Stomach (tissue), 19 donors: ENCODE measurements at regions of chr5 and their contacts with region 1.

Region 1: GRCh38 chr5:14118527-14119320 is 24.4 kb upstream of the TRIO start:
- DNase-seq: peak in 1 of 2 donors; percentile 43
- H3K4me3 ChIP-seq: no peak overlapping the region
- H3K27ac ChIP-seq: no peak overlapping the region
- H3K4me1 ChIP-seq: peaks cover 0 to 2% (median 0%) of the 10 kb centered on the region in 4 donors
- H3K27me3 ChIP-seq: no peaks in the 10 kb centered on the region
- CTCF ChIP-seq: no peak
- EP300 ChIP-seq: no peak
- POLR2A ChIP-seq: no peak

Region 2: GRCh38 chr5:14270209-14270702 is 151.5 kb after region 1 on chr5:
- intact Hi-C with region 1: loop called (anchors 10 kb)
- DNase-seq: peak in 1 of 2 donors; percentile 84
- H3K4me3 ChIP-seq: no peak overlapping the region
- H3K27ac ChIP-seq: peak overlapping the region in 4 of 5 donors; percentile 52 to 71 (median 70)
- H3K4me1 ChIP-seq: peaks cover 19 to 65% (median 45%) of the 10 kb centered on the region in 4 donors
- H3K27me3 ChIP-seq: no peaks in the 10 kb centered on the region
- CTCF ChIP-seq: peak in 5 of 7 experiments; percentile 40 to 75 (median 60)
- EP300 ChIP-seq: no peak
- POLR2A ChIP-seq: no peak